B cell (primary cell): ENCODE measurements at regions of chr11 and their contacts with region 1.

Region 1: GRCh38 chr11:7513234-7514098 is at the start of gene PPFIBP2:
- DNase-seq: peak; percentile 91
- ATAC-seq: peak; percentile 71
- H3K4me3 ChIP-seq: peak within 1 kb of the TSS; percentile 83 to 100 (median 97)
- H3K4me3 Mint-ChIP-seq: peak within 1 kb of the TSS; percentile 97
- H3K27ac ChIP-seq: peak within 1 kb of the TSS; percentile 100
- H3K27ac Mint-ChIP-seq: peak within 1 kb of the TSS; percentile 99
- H3K4me1 ChIP-seq: peaks cover 48 to 70% of the 10 kb centered on the region in 2 donors
- H3K4me1 Mint-ChIP-seq: peaks cover 39% of the 10 kb centered on the region
- H3K27me3 ChIP-seq: no peaks in the 10 kb centered on the region
- H3K27me3 Mint-ChIP-seq: no peaks in the 10 kb centered on the region
- CTCF ChIP-seq: peak; percentile 83
- total RNA-seq, gene PPFIBP2: 175 and 202 TPM in 2 replicates

Region 2: DNA sequence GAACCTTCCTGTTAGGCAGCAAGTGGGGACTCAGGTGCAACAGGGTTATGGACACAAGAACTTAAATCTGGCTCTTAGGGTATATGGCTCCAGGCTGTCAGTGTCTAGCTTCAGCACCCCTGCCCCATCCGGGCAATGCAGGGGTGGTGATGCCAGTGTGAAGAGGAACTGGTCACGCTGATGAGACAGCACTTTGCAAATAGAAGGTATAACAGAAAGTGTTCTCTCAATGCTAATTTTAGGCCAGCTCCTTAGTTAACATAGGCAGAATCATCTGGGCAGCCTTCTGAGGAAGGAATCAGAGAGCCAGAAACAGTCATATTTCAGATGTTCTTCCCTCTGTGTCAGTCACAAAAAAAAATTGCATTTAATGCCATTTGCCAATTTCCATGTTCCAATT is 220.5 kb before region 1 on chr11:
- CTCF ChIA-PET with region 1: no interaction called
- POLR2A ChIA-PET with region 1: no interaction called
- intact Hi-C with region 1: no loop called
- DNase-seq: no peak
- ATAC-seq: no peak
- H3K4me3 ChIP-seq: no peak overlapping the region
- H3K4me3 Mint-ChIP-seq: no peak overlapping the region
- H3K27ac ChIP-seq: no peak overlapping the region
- H3K27ac Mint-ChIP-seq: no peak overlapping the region
- H3K4me1 ChIP-seq: no peaks in the 10 kb centered on the region
- H3K4me1 Mint-ChIP-seq: no peaks in the 10 kb centered on the region
- H3K27me3 ChIP-seq: no peaks in the 10 kb centered on the region
- H3K27me3 Mint-ChIP-seq: peaks cover 16% of the 10 kb centered on the region
- CTCF ChIP-seq: no peak

Region 3: DNA sequence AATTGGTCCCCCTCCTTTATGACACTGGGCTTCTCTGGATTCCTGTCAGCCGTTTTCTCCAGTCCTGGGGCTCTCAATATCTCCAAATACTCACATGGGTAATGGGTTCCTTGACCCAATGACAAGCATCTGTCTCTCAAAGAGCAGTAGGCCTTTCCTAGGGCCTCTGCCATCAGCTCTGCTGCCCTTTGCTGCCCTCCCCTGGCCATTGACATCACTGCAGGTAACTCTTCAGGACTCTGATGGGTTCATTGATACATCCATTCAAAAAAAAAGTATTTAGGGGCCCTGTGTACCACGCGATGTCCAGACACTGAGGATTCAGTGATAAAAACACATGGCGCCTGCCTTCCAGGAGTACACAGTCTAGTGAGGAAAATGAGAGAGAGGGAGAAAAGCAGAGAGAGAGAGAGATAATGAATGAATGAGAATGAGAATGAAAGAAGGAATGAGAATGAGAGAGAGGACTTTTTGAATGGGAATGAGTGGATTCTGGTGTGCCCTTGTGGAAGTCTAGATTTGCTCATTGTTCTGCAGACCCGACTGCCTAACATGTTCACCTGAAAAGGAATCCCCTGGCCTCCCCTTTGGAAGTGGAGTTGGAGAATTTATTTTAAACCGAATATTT is 70.8 kb before region 1 on chr11:
- CTCF ChIA-PET with region 1: interaction called, 30 read pairs
- POLR2A ChIA-PET with region 1: interaction called, 3 read pairs
- intact Hi-C with region 1: loop called (anchors 1 kb)
- DNase-seq: peak; percentile 76
- ATAC-seq: peak; percentile 96
- H3K4me3 ChIP-seq: no peak overlapping the region
- H3K4me3 Mint-ChIP-seq: no peak overlapping the region
- H3K27ac ChIP-seq: no peak overlapping the region
- H3K27ac Mint-ChIP-seq: no peak overlapping the region
- H3K4me1 ChIP-seq: no peaks in the 10 kb centered on the region
- H3K4me1 Mint-ChIP-seq: peaks cover 2% of the 10 kb centered on the region
- H3K27me3 ChIP-seq: no peaks in the 10 kb centered on the region
- H3K27me3 Mint-ChIP-seq: no peaks in the 10 kb centered on the region
- CTCF ChIP-seq: peak; percentile 94

Region 4: GRCh38 chr11:7495882-7496551 is 17.4 kb before region 1 on chr11:
- CTCF ChIA-PET with region 1: interaction called, 33 read pairs
- POLR2A ChIA-PET with region 1: interaction called, 7 read pairs
- intact Hi-C with region 1: loop called (anchors 1 kb)
- DNase-seq: peak; percentile 82
- ATAC-seq: peak; percentile 83
- H3K4me3 ChIP-seq: no peak overlapping the region
- H3K4me3 Mint-ChIP-seq: peak overlapping the region; percentile 76
- H3K27ac ChIP-seq: peak overlapping the region; percentile 79 to 90
- H3K27ac Mint-ChIP-seq: peak overlapping the region; percentile 94
- H3K4me1 ChIP-seq: peaks cover 67 to 73% of the 10 kb centered on the region in 2 donors
- H3K4me1 Mint-ChIP-seq: peaks cover 66% of the 10 kb centered on the region
- H3K27me3 ChIP-seq: no peaks in the 10 kb centered on the region
- H3K27me3 Mint-ChIP-seq: no peaks in the 10 kb centered on the region
- CTCF ChIP-seq: no peak

Region 5: GRCh38 chr11:7548659-7549274 is 35.3 kb after region 1 on chr11:
- CTCF ChIA-PET with region 1: interaction called, 15 read pairs
- POLR2A ChIA-PET with region 1: no interaction called
- intact Hi-C with region 1: loop called (anchors 2 kb)
- DNase-seq: peak; percentile 48
- ATAC-seq: peak; percentile 88
- H3K4me3 ChIP-seq: no peak overlapping the region
- H3K4me3 Mint-ChIP-seq: no peak overlapping the region
- H3K27ac ChIP-seq: no peak overlapping the region
- H3K27ac Mint-ChIP-seq: peak overlapping the region; percentile 15
- H3K4me1 ChIP-seq: no peaks in the 10 kb centered on the region
- H3K4me1 Mint-ChIP-seq: peaks cover 22% of the 10 kb centered on the region
- H3K27me3 ChIP-seq: no peaks in the 10 kb centered on the region
- H3K27me3 Mint-ChIP-seq: no peaks in the 10 kb centered on the region
- CTCF ChIP-seq: peak; percentile 49

Region 6: DNA sequence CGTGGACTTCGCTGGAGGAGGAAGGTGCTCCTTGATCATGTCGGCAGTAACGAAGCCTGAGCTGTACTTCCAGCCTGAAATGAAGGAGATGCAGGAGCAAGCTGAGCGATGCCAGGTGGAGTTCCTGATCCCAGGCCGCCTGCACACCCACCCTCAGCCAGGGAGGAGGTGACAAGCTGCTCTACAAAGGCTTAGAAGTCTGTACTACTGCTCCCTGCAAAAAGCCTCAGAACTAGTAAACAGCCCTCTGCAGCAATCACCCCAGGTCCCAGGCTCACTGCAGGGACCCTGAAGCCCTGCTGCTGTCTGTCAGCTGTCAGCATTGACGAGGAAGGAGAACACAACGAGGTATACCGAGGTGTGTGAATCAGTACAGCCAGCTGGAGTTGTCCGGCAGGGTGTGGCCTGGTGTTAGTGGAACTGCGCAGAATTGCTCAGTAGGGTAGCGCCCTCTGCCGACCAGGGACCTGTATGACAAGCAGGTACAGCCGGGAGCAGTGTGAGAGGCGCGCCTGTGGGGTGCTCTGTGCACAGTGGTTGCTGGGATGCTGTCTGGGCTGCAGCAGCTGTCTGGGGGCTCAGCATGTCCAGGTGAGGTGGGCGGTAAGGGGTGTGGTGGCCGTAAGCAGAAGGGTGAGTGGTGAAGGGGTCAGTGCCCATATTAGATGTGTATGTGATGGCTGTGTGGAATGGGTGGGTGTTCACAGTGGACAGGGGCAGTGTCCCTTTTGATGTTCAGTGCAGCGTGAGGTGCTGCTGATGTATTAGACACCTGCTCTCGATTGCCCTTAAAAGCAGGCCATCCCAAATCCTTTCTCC is 152.2 kb after region 1 on chr11:
- CTCF ChIA-PET with region 1: interaction called, 20 read pairs
- POLR2A ChIA-PET with region 1: no interaction called
- intact Hi-C with region 1: loop called (anchors 1 kb)
- DNase-seq: peak; percentile 81
- ATAC-seq: peak; percentile 100
- H3K4me3 ChIP-seq: no peak overlapping the region
- H3K4me3 Mint-ChIP-seq: no peak overlapping the region
- H3K27ac ChIP-seq: no peak overlapping the region
- H3K27ac Mint-ChIP-seq: no peak overlapping the region
- H3K4me1 ChIP-seq: peaks cover 0 to 8% of the 10 kb centered on the region in 2 donors
- H3K4me1 Mint-ChIP-seq: peaks cover 4% of the 10 kb centered on the region
- H3K27me3 ChIP-seq: no peaks in the 10 kb centered on the region
- H3K27me3 Mint-ChIP-seq: no peaks in the 10 kb centered on the region
- CTCF ChIP-seq: peak; percentile 94